Activated CD4-positive, alpha-beta T cell treated with anti-CD3 and anti-CD28 coated beads, Interleukin-2, amount 10 ng/mL, durations not matched to agents 24 days and 14 days (primary cell): ENCODE measurements at regions of chr16 and their contacts with region 1.

Region 1: DNA sequence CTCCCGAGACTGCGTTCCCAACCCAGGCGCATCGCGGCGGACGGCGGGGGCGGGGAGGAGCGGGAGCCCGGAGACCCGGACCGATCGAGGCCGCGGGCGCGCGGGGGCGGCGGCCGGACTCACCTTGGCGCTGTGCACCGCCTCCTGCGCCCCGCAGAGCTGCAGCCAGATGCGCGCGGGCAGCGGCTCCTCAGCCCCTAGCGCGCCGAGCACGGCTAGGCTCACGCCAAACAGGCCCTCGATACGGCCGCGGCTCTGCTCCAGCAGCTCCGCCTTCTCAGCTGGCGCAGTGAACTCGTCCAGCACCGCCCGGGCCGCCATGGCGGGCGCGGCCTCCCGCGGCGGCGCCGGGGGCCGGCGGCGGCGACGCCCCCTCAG is 339 bp downstream of the N4BP1 start:
- DNase-seq: no peak
- H3K4me3 Mint-ChIP-seq: no peak overlapping the region
- H3K27ac Mint-ChIP-seq: peak overlapping the region; percentile 92
- H3K4me1 Mint-ChIP-seq: peaks cover 37% of the 10 kb centered on the region
- H3K27me3 Mint-ChIP-seq: no peaks in the 10 kb centered on the region

Region 2: GRCh38 chr16:46973207-46973995 is 1636.2 kb before region 1 on chr16 and contains the start of gene DNAJA2:
- intact Hi-C with region 1: loop called (anchors 5 kb)
- DNase-seq: peak; percentile 97
- H3K4me3 Mint-ChIP-seq: peak within 1 kb of the TSS; percentile 98
- H3K27ac Mint-ChIP-seq: peak within 1 kb of the TSS; percentile 98
- H3K4me1 Mint-ChIP-seq: peaks cover 48% of the 10 kb centered on the region
- H3K27me3 Mint-ChIP-seq: no peaks in the 10 kb centered on the region
- total RNA-seq, gene DNAJA2: 81.7 and 84.2 TPM in 2 replicates

Region 3: DNA sequence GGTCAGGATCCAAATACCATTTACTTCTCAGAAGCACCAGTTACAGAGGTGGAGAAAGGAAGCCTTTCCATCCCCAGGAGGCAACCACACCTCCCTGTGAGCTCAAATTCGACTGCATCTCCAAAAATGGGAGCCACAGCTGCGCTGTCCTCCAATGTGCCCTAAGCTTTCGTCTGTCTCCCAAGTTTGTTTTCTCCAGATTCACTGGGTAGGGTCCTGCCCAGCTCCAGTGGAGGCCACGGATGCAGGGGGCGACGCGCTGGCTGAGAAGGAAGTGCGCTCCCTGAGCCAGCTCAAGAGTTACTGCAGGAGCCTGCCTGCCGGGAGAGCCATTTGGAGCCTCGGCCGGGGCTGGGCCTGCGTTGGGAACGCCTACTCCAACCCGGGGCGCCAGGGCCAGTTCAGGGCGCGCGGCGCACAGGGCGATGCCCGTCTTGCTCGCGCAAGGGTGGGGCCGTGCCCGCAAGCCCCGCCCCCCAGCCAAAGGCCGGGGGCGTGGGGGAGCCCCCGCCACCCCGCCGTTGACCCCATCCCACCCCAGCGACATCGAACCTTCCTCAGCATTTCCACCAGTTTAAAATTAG is 244.0 kb before region 1 on chr16:
- intact Hi-C with region 1: loop called (anchors 5 kb)
- DNase-seq: peak; percentile 95
- H3K4me3 Mint-ChIP-seq: peak overlapping the region; percentile 89
- H3K27ac Mint-ChIP-seq: peak overlapping the region; percentile 91
- H3K4me1 Mint-ChIP-seq: peaks cover 46% of the 10 kb centered on the region
- H3K27me3 Mint-ChIP-seq: no peaks in the 10 kb centered on the region

Region 4: GRCh38 chr16:48498769-48499631 is 110.6 kb before region 1 on chr16:
- intact Hi-C with region 1: no loop called
- DNase-seq: no peak
- H3K4me3 Mint-ChIP-seq: no peak overlapping the region
- H3K27ac Mint-ChIP-seq: no peak overlapping the region
- H3K4me1 Mint-ChIP-seq: no peaks in the 10 kb centered on the region
- H3K27me3 Mint-ChIP-seq: no peaks in the 10 kb centered on the region

Region 5: DNA sequence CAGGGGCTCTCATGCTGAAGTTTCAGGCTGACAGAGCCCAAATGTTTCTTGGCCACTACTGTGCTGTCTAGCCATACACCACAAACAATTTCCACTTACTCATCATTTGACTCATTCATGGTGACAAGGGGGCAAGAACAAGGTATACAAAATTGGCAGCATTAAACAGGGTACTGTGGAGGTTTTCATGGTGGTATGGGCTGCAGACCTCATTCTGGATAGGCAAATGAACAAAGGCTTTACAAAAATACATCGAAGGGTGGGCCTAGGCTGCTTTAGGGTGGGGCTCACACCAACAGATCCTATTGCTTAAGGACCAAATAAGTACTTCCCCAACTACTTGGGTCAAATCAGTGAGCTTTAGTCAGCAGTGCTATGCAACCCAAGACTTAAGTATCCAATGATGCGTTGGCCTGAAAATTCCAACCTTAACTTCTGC is 52.7 kb before region 1 on chr16:
- intact Hi-C with region 1: loop called (anchors 1 kb)
- DNase-seq: peak; percentile 72
- H3K4me3 Mint-ChIP-seq: peak overlapping the region; percentile 55
- H3K27ac Mint-ChIP-seq: peak overlapping the region; percentile 86
- H3K4me1 Mint-ChIP-seq: peaks cover 72% of the 10 kb centered on the region
- H3K27me3 Mint-ChIP-seq: no peaks in the 10 kb centered on the region

Region 6: DNA sequence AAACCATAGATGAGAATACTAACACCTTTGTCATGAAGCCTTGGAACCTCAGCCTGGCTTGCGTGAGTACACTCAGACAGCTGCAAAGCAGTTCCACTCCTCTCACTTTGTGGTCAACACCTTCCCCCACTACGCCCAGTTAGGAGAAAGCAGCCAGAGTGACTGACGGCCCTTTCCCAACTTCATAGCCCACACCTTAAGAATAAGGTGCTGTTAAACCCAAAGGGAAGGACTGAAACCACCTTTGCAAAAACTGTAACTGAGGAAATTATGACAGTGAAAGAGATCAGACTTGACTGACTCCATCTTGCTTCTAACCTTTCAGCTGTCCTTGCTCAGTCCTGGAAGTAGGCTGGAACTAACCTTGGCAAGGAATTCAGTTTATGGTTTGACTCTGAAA is 13.3 kb before region 1 on chr16:
- intact Hi-C with region 1: loop called (anchors 1 kb)
- DNase-seq: peak; percentile 77
- H3K4me3 Mint-ChIP-seq: peak overlapping the region; percentile 54
- H3K27ac Mint-ChIP-seq: peak overlapping the region; percentile 88
- H3K4me1 Mint-ChIP-seq: peaks cover 40% of the 10 kb centered on the region
- H3K27me3 Mint-ChIP-seq: no peaks in the 10 kb centered on the region

Region 7: DNA sequence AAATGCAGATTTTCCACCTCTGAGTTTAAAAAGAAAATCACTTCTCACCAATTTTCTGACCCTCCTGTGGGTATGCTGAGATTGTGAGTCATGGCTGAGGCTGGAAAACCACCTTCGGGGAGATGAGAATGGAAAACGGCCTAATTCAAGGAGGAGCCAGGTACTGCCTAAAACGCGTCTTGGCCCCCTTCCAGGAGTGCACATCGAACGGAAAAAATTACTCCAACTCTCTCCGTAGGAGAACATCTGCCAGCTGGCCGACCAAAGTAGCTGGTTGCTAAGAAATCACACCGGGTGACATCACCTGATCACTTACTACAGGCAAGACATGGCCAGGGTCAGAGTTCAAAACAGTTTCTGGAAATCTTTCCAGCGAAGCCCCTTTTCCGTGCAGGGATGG is 1138.7 kb after region 1 on chr16:
- intact Hi-C with region 1: no loop called
- DNase-seq: no peak
- H3K4me3 Mint-ChIP-seq: no peak overlapping the region
- H3K27ac Mint-ChIP-seq: no peak overlapping the region
- H3K4me1 Mint-ChIP-seq: no peaks in the 10 kb centered on the region
- H3K27me3 Mint-ChIP-seq: no peaks in the 10 kb centered on the region